HCT116 (cell line): ENCODE measurements at regions of chr11 and their contacts with region 1.

Region 1: DNA sequence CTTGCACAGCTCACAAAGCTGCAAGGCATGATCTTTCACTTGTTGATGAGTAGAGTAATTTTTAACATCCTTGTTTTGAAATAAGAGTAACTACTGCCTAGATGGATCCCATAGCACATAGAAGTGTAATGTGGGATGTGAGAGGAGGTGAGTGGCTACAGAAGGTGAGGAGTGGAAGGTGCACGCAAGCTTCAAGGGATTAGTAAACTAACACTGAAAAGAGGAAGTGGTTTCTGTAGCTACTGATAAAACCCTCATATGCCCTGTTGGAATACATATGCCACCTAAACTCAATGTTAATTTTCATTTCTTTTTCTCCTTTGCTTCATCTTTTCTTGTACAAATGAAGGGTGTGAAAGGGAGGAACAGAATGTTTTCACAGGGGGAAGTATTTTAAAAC is 22.0 kb upstream of the CTSC start:
- DNase-seq: no peak
- ATAC-seq: no peak
- H3K4me3 ChIP-seq: no peak overlapping the region
- H3K27ac ChIP-seq: no peak overlapping the region
- H3K4me1 ChIP-seq: peaks cover 0 to 8% of the 10 kb centered on the region in 2 experiments; a peak in 1 of 4 replicates
- H3K27me3 ChIP-seq: no peaks in the 10 kb centered on the region
- CTCF ChIP-seq: no peak
- POLR2A ChIP-seq: no peak
- RAD21 ChIP-seq: no peak

Region 2: DNA sequence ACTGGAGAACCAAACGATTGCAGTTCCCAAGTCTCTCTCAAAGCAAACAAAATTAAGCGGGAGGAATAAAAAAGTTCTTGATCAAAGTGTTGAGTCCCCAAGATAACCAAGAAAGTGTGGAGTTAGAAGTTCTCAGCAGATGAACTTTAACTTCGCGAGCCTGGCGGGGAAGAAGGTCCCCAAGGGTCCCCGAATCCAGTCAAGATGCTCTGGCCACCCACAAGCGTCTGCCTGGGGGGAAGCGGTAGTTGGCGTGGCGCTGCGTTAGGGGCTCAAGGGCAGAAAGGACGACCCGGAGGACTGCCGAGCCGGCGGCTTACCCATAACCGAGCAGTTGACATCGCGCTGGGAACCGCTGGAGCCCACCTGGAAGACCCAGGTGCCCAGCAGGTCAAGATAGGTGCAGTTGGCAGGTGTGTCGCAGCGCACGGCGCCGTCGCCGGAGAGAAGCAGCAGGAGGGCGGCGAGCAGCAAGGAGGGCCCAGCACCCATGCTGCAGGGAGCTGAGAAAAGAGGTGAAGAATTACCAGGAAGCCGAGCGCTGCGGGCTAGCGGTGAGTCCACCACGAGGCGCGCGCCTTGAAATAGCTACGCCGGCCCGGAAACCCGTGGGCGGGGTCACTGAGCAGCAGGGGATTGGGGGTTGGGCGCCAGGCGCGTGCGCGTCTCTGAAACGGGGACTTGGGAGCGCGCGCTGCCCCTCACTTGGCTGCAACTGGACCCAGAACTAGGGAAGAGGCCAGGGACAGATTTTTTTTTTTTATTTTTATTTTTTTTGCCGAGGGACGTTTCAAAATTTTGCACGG is 22.2 kb before region 1 on chr11 and contains the start of gene CTSC:
- CTCF ChIA-PET with region 1: no interaction called
- POLR2A ChIA-PET with region 1: no interaction called
- RAD21 ChIA-PET with region 1: no interaction called
- intact Hi-C with region 1: loop called (anchors 1 kb)
- DNase-seq: peak; percentile 53
- ATAC-seq: peak; percentile 91
- H3K4me3 ChIP-seq: peak within 1 kb of the TSS; percentile 79 to 91
- H3K27ac ChIP-seq: peak within 1 kb of the TSS; percentile 52
- H3K4me1 ChIP-seq: peaks cover 3 to 19% of the 10 kb centered on the region in 2 experiments; a peak in 3 of 4 replicates
- H3K27me3 ChIP-seq: no peaks in the 10 kb centered on the region
- CTCF ChIP-seq: no peak
- POLR2A ChIP-seq: peak; percentile 93
- RAD21 ChIP-seq: no peak
- total RNA-seq, gene CTSC: 38.0 TPM

Region 3: GRCh38 chr11:88709567-88709966 is 350.0 kb after region 1 on chr11:
- CTCF ChIA-PET with region 1: no interaction called
- POLR2A ChIA-PET with region 1: no interaction called
- RAD21 ChIA-PET with region 1: no interaction called
- intact Hi-C with region 1: no loop called
- DNase-seq: no peak
- ATAC-seq: no peak
- H3K4me3 ChIP-seq: no peak overlapping the region
- H3K27ac ChIP-seq: no peak overlapping the region
- H3K4me1 ChIP-seq: no peaks in the 10 kb centered on the region
- H3K27me3 ChIP-seq: no peaks in the 10 kb centered on the region
- CTCF ChIP-seq: no peak
- POLR2A ChIP-seq: no peak
- RAD21 ChIP-seq: no peak